Left ventricle myocardium superior (tissue), 1 donor: ENCODE measurements at regions of chr20 and their contacts with region 1.

Region 1: GRCh38 chr20:561437-562231 is 18.0 kb upstream of the CSNK2A1 start:
- DNase-seq: peak; percentile 47
- ATAC-seq: peak; percentile 89

Region 2: GRCh38 chr20:371755-372542 is 189.7 kb before region 1 on chr20:
- intact Hi-C with region 1: no loop called
- DNase-seq: peak; percentile 51
- ATAC-seq: peak; percentile 64

Region 3: GRCh38 chr20:642398-643174 is 81.0 kb after region 1 on chr20:
- intact Hi-C with region 1: loop called (anchors 5 kb)
- DNase-seq: peak; percentile 67
- ATAC-seq: peak; percentile 65

Region 4: DNA sequence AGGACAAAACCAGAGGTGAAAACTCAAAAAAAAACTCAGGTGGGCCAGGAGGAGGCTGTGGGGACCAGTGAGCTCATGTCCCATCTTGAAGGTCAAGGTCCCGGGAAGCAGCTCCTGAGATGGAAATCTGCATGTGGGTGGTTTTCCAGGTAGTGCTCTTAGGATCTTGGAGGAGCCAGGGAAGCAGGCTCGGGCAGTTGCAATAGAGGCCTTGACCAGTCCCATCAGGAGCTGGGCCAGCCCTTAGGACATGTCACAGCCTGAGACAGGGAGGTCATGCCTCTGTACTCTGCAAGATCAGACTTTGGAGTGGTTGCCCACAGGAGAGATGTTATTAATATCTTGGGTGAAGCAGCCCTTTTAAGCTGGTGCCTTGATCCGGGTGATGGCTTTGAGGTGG is 175.3 kb after region 1 on chr20:
- intact Hi-C with region 1: loop called (anchors 5 kb)
- DNase-seq: no peak
- ATAC-seq: peak; percentile 41